Panc1 (cell line): ENCODE measurements at regions of chr18 and their contacts with region 1.

Region 1: DNA sequence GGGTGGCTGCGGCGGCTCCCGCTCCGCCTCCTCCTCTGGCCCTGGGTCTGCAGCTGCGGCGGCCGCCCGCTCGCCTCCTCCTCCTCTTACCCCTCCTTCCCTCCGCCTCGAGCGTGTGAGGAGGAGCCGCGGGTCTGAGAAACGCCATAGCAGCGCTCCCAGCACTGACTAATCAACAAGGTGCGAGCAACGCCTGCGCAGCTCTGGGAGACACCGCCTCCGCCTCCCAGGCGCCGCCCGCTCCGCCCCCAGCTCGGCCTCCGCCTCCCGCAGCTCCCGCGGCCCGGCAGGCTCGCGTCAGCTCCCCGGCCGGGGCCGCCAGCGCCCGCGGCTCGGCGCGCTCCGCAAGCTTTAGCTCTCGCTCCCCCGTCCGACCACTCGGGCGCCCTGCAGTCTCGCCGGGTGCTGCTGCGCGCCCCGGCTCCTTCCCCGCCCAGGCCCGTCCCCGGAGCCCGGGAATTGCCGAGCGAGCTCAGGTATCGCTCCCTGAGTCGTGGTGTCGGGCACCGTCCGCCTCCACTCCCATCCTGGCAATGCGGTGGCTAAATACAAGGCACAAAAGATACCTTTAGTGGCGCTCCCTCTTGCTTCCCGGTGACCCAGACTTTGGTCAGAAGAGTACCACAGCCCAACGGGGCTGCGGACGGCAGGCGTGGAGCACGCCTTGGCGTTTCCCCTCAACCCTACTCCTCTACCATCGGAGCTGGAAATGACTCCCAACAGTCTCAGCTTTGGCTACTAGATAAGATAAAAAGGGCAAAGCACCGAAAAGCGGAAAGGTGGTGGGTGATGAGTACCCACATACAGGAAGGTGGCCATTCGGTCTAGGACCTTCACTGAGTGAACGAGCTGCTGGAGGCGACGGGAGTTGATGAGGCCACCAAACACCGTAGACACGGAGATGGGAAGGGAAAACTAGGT is at the start of gene GAREM1:
- DNase-seq: peak; percentile 58
- ATAC-seq: peak; percentile 97
- H3K4me3 ChIP-seq: peak within 1 kb of the TSS; percentile 71 to 87
- H3K27ac ChIP-seq: peak within 1 kb of the TSS; percentile 74
- H3K4me1 ChIP-seq: peaks cover 8% of the 10 kb centered on the region
- H3K27me3 ChIP-seq: no peaks in the 10 kb centered on the region
- CTCF ChIP-seq: peak; percentile 82
- total RNA-seq, gene GAREM1: 4.7 TPM

Region 2: GRCh38 chr18:32167975-32168730 is 302.8 kb before region 1 on chr18:
- CTCF ChIA-PET with region 1: no interaction called
- POLR2A ChIA-PET with region 1: no interaction called
- in situ Hi-C with region 1: no loop called
- intact Hi-C with region 1: loop called (anchors 10 kb)
- DNase-seq: no peak
- ATAC-seq: no peak
- H3K4me3 ChIP-seq: no peak overlapping the region
- H3K27ac ChIP-seq: no peak overlapping the region
- H3K4me1 ChIP-seq: no peaks in the 10 kb centered on the region
- H3K27me3 ChIP-seq: no peaks in the 10 kb centered on the region
- CTCF ChIP-seq: no peak

Region 3: DNA sequence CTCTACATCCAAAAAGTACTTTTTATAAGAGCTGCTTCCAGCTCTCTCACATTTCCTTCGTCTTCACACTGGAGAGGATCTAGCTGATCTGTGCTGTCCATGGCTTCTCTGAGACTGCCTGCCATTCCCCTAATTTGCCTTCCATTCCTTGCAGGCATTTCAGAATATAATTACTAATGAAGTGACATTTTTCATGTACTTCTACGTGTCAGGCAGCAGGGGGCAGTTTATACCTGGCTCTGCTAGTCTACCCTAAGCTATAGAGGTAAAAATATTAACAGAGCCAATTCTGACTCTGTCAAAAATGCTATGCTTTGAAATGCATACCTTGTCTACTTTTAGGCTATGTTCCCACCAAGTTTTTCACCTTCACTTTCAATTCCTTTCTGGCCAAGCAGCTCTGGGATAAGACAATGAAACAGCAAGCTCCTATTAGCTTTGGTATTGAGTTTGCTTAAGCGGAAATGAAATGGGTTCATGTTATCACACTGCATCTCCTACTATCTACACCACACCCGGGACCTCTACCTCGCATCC is 199.2 kb before region 1 on chr18:
- CTCF ChIA-PET with region 1: interaction called, 19 read pairs
- POLR2A ChIA-PET with region 1: no interaction called
- in situ Hi-C with region 1: no loop called
- intact Hi-C with region 1: loop called (anchors 2 kb)
- DNase-seq: peak; percentile 5
- ATAC-seq: peak; percentile 74; the same call in 1 of the 2 replicates
- H3K4me3 ChIP-seq: no peak overlapping the region
- H3K27ac ChIP-seq: no peak overlapping the region
- H3K4me1 ChIP-seq: no peaks in the 10 kb centered on the region
- H3K27me3 ChIP-seq: no peaks in the 10 kb centered on the region
- CTCF ChIP-seq: peak; percentile 73

Region 4: GRCh38 chr18:32289483-32290075 is 181.4 kb before region 1 on chr18:
- CTCF ChIA-PET with region 1: interaction called, 16 read pairs
- POLR2A ChIA-PET with region 1: interaction called, 7 read pairs
- in situ Hi-C with region 1: no loop called
- intact Hi-C with region 1: no loop called
- DNase-seq: peak; percentile 38
- ATAC-seq: peak; percentile 84
- H3K4me3 ChIP-seq: no peak overlapping the region
- H3K27ac ChIP-seq: no peak overlapping the region
- H3K4me1 ChIP-seq: no peaks in the 10 kb centered on the region
- H3K27me3 ChIP-seq: no peaks in the 10 kb centered on the region
- CTCF ChIP-seq: peak; percentile 75

Region 5: DNA sequence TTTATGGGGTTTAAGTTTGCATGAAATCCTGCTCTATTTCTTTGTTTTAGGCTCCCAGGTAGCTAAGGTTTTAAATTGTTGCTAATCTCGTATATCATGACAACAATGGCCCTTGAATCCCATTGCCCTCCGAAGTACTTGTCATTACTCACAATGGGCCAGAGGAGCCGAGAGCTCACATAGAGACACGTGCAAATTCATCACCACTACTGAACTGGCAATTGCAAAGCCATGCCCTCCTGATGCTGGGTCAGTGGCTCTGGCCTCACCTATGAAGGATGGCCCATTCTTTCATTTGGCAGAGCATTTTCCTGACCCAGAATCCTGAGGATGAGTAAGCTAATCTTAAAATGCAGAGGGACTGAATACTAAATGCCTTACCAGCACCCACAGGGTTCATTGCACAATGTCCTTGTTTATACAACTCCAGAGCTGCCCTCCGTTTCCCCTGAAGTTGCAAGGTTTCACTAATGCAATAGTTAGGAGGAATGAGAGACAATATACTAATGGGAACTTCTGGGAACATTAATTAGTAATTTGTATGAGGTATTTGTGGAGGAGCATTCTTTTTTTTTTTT is 71.3 kb after region 1 on chr18:
- CTCF ChIA-PET with region 1: no interaction called
- POLR2A ChIA-PET with region 1: no interaction called
- in situ Hi-C with region 1: no loop called
- intact Hi-C with region 1: no loop called
- DNase-seq: no peak
- ATAC-seq: no peak
- H3K4me3 ChIP-seq: no peak overlapping the region
- H3K27ac ChIP-seq: no peak overlapping the region
- H3K4me1 ChIP-seq: no peaks in the 10 kb centered on the region
- H3K27me3 ChIP-seq: no peaks in the 10 kb centered on the region; the same call in 1 of the 2 replicates
- CTCF ChIP-seq: no peak

Region 6: GRCh38 chr18:32576296-32576916 is 105.4 kb after region 1 on chr18:
- CTCF ChIA-PET with region 1: no interaction called
- POLR2A ChIA-PET with region 1: no interaction called
- in situ Hi-C with region 1: no loop called
- intact Hi-C with region 1: no loop called
- DNase-seq: no peak
- ATAC-seq: peak; percentile 74; the same call in 1 of the 2 replicates
- H3K4me3 ChIP-seq: peak overlapping the region in 1 of 2 experiments; percentile 15; a peak in 1 of 4 replicates
- H3K27ac ChIP-seq: no peak overlapping the region
- H3K4me1 ChIP-seq: no peaks in the 10 kb centered on the region
- H3K27me3 ChIP-seq: no peaks in the 10 kb centered on the region
- CTCF ChIP-seq: peak; percentile 67